ENCODE measurements at regions of chr14 and their contacts with region 1.

Region 1: GRCh38 chr14:76910371-76910890 is 84.2 kb downstream of the LRRC74A start:
- DNase-seq: no peak
- H3K4me3 ChIP-seq: no peak overlapping the region
- H3K27ac ChIP-seq: no peak overlapping the region
- H3K27me3 ChIP-seq: no peaks in the 10 kb centered on the region
- CTCF ChIP-seq: no peak

Region 2: DNA sequence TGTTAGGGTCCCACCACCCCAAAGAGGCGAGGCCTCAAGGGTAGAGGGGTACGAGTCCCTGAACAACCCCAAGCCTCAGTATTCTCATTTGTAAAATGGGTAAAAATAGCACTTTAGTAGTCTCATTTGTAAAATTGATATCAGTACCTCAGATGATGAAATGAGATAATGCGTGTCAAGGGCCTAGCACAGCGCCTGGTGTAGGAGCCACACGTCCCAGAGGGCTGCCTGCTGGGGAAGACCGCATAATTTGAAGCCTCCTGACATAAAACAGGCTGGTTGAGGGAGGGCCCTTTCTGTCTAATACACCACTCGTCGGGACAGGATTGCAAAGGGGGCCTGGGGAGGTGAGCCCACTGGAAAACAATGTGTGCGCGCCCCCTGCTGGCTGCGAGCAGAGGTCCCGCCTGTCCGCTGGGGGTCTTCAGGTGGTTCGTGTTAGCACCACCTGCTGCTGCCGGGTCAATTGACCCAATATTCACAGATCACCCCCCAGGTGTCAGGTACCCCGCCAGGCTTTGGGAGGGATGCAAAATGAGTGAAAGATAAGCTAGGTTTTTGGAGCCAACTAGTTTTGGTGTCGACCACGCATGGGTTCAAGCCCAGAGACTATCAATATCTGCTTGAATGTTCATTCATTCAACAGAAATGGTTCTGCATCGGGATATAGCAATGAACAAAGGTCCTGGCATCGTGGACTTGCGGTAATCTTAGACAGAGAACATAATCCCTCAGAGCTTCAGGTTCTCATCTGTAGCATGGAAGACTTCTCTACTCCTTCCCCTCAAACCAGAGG is 142.8 kb after region 1 on chr14:
- intact Hi-C with region 1: loop called in 1 of 2 experiments (anchors 5 kb)
- DNase-seq: peak in 5 of 10 donors; percentile 52 to 76 (median 60)
- H3K4me3 ChIP-seq: no peak overlapping the region
- H3K27ac ChIP-seq: peak overlapping the region in 7 of 59 donors; percentile 26 to 37 (median 29)
- H3K27me3 ChIP-seq: no peaks in the 10 kb centered on the region
- CTCF ChIP-seq: peak; percentile 60 to 96 (median 90)

Measured in dorsolateral prefrontal cortex (tissue), 120 donors.